ENCODE measurements at regions of chr19 and their contacts with region 1.

Region 1: DNA sequence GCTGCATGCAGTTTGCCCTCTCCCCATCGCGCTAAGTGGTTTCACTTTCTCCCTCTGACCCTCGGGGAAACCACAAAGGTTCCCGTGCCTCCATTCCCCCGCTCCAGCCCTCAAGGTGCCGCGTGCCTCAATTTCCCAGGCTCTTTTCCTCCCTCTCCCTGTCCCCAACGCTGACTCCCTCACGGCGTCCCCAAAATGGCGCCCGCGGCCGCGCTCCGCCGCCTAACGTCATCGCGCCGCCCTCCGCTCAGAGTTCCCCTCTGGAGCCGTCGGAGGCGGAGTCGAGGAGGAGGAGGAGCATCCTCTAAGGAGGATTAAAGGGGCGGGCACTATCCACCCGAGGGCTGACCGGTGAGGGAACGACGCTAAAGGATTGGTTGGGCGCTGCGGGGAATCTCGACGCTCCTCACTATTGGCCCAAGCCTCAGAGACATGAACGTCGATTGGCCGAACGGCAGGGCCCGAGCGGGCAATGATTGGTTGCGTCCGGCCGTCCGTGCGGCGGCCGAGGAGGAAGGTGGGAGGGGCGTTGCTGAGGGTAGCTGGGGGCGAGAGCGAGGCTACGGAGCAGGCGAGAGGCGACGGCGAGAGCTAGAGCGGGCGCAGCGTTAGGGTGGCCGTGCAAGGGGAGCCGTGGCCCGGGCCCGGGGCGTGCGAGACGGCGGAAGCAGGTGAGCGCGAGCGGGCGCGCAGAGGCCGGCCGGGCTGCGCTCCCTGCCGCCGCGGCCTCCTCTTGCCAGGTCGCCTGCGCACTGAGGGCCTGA is at the start of gene ZNF574:
- DNase-seq: peak; percentile 98
- H3K4me3 ChIP-seq: peak within 1 kb of the TSS; percentile 90
- H3K27ac ChIP-seq: peak within 1 kb of the TSS; percentile 90
- H3K4me1 ChIP-seq: peaks cover 25% of the 10 kb centered on the region
- H3K27me3 ChIP-seq: no peaks in the 10 kb centered on the region
- CTCF ChIP-seq: no peak
- total RNA-seq, gene ZNF574: 19.4 and 21.6 TPM in 2 replicates

Region 2: GRCh38 chr19:41883821-41884733 is 191.7 kb before region 1 on chr19:
- CTCF ChIA-PET with region 1: interaction called, 3 read pairs
- POLR2A ChIA-PET with region 1: interaction called, 34 read pairs
- intact Hi-C with region 1: loop called (anchors 5 kb)
- DNase-seq: peak; percentile 91 to 96
- H3K4me3 ChIP-seq: peak overlapping the region; percentile 83
- H3K27ac ChIP-seq: no peak overlapping the region
- H3K4me1 ChIP-seq: peaks cover 31% of the 10 kb centered on the region
- H3K27me3 ChIP-seq: no peaks in the 10 kb centered on the region
- CTCF ChIP-seq: no peak

Region 3: DNA sequence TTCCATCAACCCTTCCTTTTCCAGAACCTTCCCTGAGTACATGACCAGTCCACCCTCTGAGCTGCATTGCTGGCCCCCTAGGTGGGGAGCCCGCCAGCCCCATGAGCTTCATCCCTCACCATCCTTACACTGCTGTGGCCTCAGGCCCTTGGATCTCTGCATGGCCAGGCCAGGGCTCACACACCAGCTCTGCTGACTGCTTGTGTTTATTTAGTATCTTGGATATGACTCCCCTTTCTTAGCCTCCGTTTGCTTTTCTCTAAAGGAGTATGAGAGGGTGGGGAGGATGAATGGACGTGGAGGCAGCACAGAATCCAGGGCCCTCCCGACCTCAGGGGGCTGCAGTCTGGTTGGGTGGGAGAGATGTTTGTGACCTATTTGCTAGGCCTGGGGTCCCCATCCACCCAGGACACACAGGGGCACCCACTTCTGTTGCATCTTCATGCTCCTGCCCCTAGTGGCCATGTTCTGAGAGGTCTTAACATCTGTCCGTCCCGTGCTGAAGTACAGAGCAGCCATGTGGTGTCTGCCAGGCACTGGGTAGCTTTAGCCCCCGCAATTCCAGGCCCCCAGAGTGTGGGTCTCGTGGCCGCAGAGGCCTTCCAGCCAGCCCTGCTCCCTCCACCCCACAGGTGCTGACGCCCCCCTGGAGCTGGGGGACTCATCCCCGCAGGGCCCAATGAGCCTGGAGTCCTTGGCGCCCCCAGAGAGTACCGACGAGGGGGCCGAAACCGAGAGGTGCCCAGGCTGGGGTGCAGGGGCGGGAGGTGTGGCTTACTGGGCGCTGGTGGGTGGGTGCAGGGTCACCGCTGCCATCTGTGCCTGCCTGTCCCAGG is 179.8 kb before region 1 on chr19:
- CTCF ChIA-PET with region 1: interaction called, 11 read pairs
- POLR2A ChIA-PET with region 1: no interaction called
- intact Hi-C with region 1: no loop called
- DNase-seq: no peak
- H3K4me3 ChIP-seq: no peak overlapping the region
- H3K27ac ChIP-seq: no peak overlapping the region
- H3K4me1 ChIP-seq: no peaks in the 10 kb centered on the region
- H3K27me3 ChIP-seq: no peaks in the 10 kb centered on the region
- CTCF ChIP-seq: peak; percentile 45; the same call in 1 of the 2 replicates

Region 4: GRCh38 chr19:42032431-42032830 is 43.4 kb before region 1 on chr19:
- CTCF ChIA-PET with region 1: no interaction called
- POLR2A ChIA-PET with region 1: interaction called, 3 read pairs
- intact Hi-C with region 1: loop called (anchors 5 kb)
- DNase-seq: peak in 1 of 2 experiments; percentile 39
- H3K4me3 ChIP-seq: no peak overlapping the region
- H3K27ac ChIP-seq: no peak overlapping the region
- H3K4me1 ChIP-seq: no peaks in the 10 kb centered on the region; the same call in 1 of the 2 replicates
- H3K27me3 ChIP-seq: peaks cover 14% of the 10 kb centered on the region; the same call in 1 of the 2 replicates
- CTCF ChIP-seq: no peak

Region 5: GRCh38 chr19:42051166-42052118 is 24.4 kb before region 1 on chr19:
- CTCF ChIA-PET with region 1: no interaction called
- POLR2A ChIA-PET with region 1: interaction called, 10 read pairs
- intact Hi-C with region 1: no loop called
- DNase-seq: peak; percentile 78 to 96
- H3K4me3 ChIP-seq: no peak overlapping the region
- H3K27ac ChIP-seq: peak overlapping the region; percentile 76
- H3K4me1 ChIP-seq: peaks cover 35% of the 10 kb centered on the region
- H3K27me3 ChIP-seq: no peaks in the 10 kb centered on the region
- CTCF ChIP-seq: no peak

Region 6: DNA sequence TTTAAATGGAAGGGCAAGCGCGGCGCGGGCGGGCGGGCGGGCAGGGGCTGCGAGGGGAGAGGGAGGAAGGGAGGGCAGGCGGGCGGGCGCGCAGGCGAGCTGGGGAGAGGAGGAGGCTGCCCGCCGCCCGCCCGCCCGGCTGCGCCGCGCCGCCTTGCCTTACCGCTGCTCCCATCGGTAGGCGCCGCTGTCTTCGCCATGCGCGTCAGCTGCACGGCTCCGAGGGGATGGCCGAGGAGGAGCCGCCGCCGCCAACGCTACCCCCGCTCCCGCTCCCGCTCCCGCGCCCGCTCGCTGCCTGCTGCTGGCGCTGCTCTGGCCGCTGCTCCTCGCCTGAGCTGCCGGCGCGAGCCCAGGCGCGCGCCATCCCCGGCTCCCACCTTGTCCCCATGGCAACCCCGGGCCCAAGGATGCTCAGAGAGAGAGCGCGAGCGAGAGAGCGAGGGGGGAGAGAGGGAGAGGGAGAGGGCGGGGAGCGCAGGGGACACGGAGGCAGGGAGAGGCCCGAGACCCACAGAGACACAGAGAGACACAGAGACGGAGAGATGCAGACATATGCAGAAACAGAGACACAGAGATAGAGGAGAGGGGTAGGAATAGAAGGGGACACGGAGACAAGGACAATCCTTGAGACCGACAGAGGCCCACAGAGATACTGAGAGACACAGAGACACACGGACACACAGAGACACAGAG is 101.3 kb after region 1 on chr19:
- CTCF ChIA-PET with region 1: no interaction called
- POLR2A ChIA-PET with region 1: interaction called, 13 read pairs
- intact Hi-C with region 1: no loop called
- DNase-seq: peak; percentile 58 to 75
- H3K4me3 ChIP-seq: peak overlapping the region; percentile 68; the same call in 1 of the 2 replicates
- H3K27ac ChIP-seq: no peak overlapping the region
- H3K4me1 ChIP-seq: peaks cover 10% of the 10 kb centered on the region
- H3K27me3 ChIP-seq: peaks cover 37% of the 10 kb centered on the region
- CTCF ChIP-seq: no peak; the same call in 1 of the 2 replicates

Measured in PC-9 (cell line).